PC-3 (cell line): ENCODE measurements at regions of chr6 and their contacts with region 1.

Region 1: DNA sequence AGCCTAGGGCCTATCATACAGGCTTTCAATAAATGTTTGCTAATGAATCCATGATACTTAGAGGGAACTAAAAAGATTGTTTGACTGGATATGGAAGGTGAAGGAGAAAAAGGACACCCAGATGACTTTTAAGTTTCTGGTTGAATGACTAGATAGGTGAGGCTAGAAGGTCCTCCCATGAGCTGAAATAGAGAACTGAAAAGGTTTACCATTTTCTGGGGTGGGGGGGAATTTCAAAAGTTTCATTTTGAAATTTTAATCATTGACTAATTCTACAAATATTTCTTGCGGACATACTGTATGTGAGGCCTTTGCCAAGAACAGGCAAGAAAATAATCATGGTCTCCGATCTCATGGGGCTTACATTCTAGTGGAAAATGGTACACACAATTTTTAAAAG is 17.9 kb upstream of the ZBTB2 start:
- DNase-seq: no peak
- ATAC-seq: no peak
- H3K4me3 ChIP-seq: no peak overlapping the region
- H3K27ac ChIP-seq: no peak overlapping the region
- H3K4me1 ChIP-seq: no peaks in the 10 kb centered on the region
- H3K27me3 ChIP-seq: no peaks in the 10 kb centered on the region
- CTCF ChIP-seq: no peak

Region 2: DNA sequence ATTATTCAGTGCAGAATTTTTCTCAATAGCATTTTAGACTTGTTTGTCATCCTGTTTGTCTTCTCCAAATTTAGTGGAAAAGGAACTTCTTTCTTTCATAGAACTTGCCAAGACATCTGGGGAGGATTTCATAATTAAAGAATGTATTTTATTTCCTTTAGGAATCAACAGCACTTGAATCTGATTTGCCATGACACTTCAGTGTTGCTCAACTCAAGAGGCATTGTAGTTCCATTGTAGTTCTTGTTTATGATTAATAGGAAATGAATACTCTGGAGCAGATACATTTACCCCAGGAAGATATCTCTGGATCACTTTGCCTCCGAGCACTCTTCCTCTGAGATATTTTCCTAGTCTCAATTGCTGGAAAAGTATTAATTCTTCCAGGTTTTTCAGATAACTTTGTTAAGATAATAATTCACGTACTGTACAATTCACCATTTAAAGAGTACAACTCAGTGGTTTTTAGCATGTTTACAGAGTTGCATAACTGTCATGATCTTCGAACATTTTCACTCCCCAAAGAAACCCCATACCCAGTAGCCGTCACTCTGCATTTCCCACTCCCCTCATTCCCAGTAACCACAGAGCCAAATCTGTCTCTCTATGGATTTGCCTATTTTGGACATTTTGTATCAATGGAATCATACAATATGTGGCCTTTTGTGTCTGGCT is 139.8 kb before region 1 on chr6:
- CTCF ChIA-PET with region 1: no interaction called
- POLR2A ChIA-PET with region 1: no interaction called
- intact Hi-C with region 1: no loop called
- DNase-seq: peak; percentile 3
- ATAC-seq: no peak
- H3K4me3 ChIP-seq: no peak overlapping the region
- H3K27ac ChIP-seq: no peak overlapping the region
- H3K4me1 ChIP-seq: no peaks in the 10 kb centered on the region
- H3K27me3 ChIP-seq: no peaks in the 10 kb centered on the region
- CTCF ChIP-seq: no peak

Region 3: GRCh38 chr6:151475653-151476523 is 66.6 kb after region 1 on chr6:
- CTCF ChIA-PET with region 1: no interaction called
- POLR2A ChIA-PET with region 1: no interaction called
- intact Hi-C with region 1: loop called (anchors 5 kb)
- DNase-seq: peak; percentile 58
- ATAC-seq: no peak
- H3K4me3 ChIP-seq: no peak overlapping the region; the same call in 1 of the 2 replicates
- H3K27ac ChIP-seq: no peak overlapping the region
- H3K4me1 ChIP-seq: no peaks in the 10 kb centered on the region
- H3K27me3 ChIP-seq: no peaks in the 10 kb centered on the region
- CTCF ChIP-seq: peak; percentile 76